Psoas muscle (tissue), 8 donors: ENCODE measurements at regions of chr9 and their contacts with region 1.

Region 1: GRCh38 chr9:89602978-89603766 is 1.6 kb upstream of the GADD45G start:
- DNase-seq: peak; percentile 88 to 94
- ATAC-seq: peak; percentile 28 to 55 (median 42)
- H3K4me3 ChIP-seq: peak overlapping the region; percentile 82
- H3K27ac ChIP-seq: peak overlapping the region; percentile 93
- H3K4me1 ChIP-seq: peaks cover 25% of the 10 kb centered on the region
- H3K27me3 ChIP-seq: no peaks in the 10 kb centered on the region
- CTCF ChIP-seq: peak; percentile 84

Region 2: GRCh38 chr9:89437000-89437631 is 166.1 kb before region 1 on chr9:
- intact Hi-C with region 1: no loop called
- DNase-seq: no peak
- ATAC-seq: no peak
- H3K4me3 ChIP-seq: no peak overlapping the region
- H3K27ac ChIP-seq: no peak overlapping the region
- H3K4me1 ChIP-seq: peaks cover 52% of the 10 kb centered on the region
- H3K27me3 ChIP-seq: no peaks in the 10 kb centered on the region
- CTCF ChIP-seq: no peak

Region 3: GRCh38 chr9:89634995-89635742 is 32.0 kb after region 1 on chr9:
- intact Hi-C with region 1: loop called in 1 of 2 experiments (anchors 2 kb)
- DNase-seq: no peak
- ATAC-seq: peak in 2 of 4 donors; percentile 23 to 29
- H3K4me3 ChIP-seq: no peak overlapping the region
- H3K27ac ChIP-seq: no peak overlapping the region
- H3K4me1 ChIP-seq: peaks cover 43% of the 10 kb centered on the region
- H3K27me3 ChIP-seq: no peaks in the 10 kb centered on the region
- CTCF ChIP-seq: no peak

Region 4: DNA sequence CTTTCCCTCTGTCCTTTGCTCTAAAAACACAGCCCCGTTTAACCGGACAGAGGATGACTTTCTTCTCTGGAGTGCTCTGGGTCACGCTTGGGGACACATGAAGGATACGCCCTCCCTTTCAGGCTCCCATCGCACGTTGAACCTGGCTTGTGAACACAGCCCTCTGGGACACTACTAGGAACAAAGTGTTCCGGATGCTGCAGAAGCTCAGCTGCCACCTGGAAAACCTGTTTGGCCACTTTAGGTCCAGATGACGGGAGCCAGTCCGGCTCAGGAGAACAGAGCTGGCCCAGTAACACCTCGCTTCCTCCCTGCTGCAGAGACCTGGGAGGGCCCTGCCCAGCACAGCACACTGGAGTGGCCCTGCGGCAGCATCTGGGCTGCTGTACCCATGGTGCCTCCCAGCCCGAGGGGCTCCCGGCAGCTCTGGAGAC is 61.7 kb after region 1 on chr9:
- intact Hi-C with region 1: loop called in 1 of 2 experiments (anchors 5 kb)
- DNase-seq: no peak
- ATAC-seq: no peak
- H3K4me3 ChIP-seq: no peak overlapping the region
- H3K27ac ChIP-seq: no peak overlapping the region
- H3K4me1 ChIP-seq: peaks cover 44% of the 10 kb centered on the region
- H3K27me3 ChIP-seq: no peaks in the 10 kb centered on the region
- CTCF ChIP-seq: no peak

Region 5: DNA sequence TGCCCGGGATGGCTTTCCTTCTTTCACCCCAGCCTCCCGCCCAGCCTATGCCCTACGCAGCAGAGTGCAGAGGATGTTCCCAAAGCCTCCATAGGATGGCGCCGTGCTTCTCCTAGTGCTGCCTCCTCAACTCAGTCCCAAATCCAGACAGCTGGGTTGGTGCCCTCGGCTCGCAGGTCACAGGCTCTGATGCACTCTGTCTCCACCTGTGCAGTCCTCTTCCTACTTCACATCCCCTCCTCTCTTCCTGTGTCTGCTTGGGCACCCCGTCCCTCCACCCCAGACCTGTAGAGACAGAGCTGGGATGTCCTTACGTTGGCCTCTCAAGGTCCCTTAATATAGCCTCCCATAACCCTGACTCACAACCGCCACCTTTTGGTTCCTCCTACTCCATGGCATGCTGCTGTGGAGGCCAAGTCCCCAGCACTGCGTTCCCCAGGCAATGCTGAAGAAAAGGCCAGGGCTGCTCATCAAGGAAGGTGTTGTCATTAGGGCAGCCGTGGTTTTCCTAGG is 316.1 kb after region 1 on chr9:
- intact Hi-C with region 1: loop called (anchors 1 to 5 kb)
- DNase-seq: no peak
- ATAC-seq: peak; percentile 83 to 97 (median 90)
- H3K4me3 ChIP-seq: no peak overlapping the region
- H3K27ac ChIP-seq: no peak overlapping the region
- H3K4me1 ChIP-seq: no peaks in the 10 kb centered on the region
- H3K27me3 ChIP-seq: no peaks in the 10 kb centered on the region
- CTCF ChIP-seq: peak; percentile 39

Region 6: GRCh38 chr9:90102292-90102901 is 499.2 kb after region 1 on chr9:
- intact Hi-C with region 1: loop called (anchors 1 to 2 kb)
- DNase-seq: peak; percentile 73 to 85
- ATAC-seq: peak; percentile 73 to 87 (median 78)
- H3K4me3 ChIP-seq: no peak overlapping the region
- H3K27ac ChIP-seq: no peak overlapping the region
- H3K4me1 ChIP-seq: peaks cover 25% of the 10 kb centered on the region
- H3K27me3 ChIP-seq: no peaks in the 10 kb centered on the region
- CTCF ChIP-seq: peak; percentile 83